Dorsolateral prefrontal cortex (tissue), 120 donors: ENCODE measurements at regions of chr10 and their contacts with region 1.

Region 1: DNA sequence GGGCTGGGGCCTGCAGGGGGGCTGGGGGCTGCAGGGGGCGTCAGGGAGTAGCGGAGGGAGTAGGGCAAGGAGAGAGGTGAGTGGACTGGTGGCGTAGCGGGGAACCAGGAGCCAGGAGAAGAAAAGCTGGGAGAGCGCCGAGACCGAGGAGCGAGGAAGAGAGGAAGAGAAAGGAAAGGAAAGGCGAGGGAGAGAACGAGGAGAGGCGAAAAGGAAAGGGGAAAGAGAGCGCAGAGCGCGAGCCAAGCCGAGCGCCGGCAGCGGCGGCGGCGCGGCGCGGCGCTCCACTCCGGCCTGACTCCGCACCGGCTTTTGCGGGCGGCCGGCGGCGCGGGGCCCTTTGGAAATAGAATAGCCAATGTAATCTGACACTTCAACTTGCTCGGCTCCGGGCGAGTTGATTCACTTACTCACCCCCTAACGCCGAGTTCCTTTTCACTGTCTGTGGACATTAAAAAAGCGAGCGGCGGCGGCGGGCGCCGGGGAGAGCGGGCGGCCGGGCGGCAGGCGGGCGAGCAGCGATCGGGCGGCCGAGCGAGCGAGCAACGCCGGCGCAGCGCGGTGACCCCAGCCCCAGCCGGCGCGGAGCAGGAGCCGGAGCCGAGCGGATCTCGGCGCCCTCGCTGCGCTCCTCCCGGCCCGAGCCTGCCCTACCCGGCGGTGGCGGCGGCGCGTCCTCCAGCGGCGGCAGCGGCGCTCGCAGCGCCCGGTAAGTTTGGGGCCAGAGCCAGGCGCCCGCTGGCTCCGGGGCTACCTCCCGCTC is at the start of gene ZMIZ1:
- DNase-seq: peak; percentile 73 to 92 (median 86)
- H3K4me3 ChIP-seq: peak within 1 kb of the TSS; percentile 60 to 94 (median 81)
- H3K27ac ChIP-seq: peak within 1 kb of the TSS; percentile 53 to 99 (median 93)
- H3K27me3 ChIP-seq: no peaks in the 10 kb centered on the region
- CTCF ChIP-seq: peak in 29 of 56 donors; percentile 2 to 52 (median 17)
- total RNA-seq, gene ZMIZ1: 67.5 to 153 (median 96.5) TPM

Region 2: DNA sequence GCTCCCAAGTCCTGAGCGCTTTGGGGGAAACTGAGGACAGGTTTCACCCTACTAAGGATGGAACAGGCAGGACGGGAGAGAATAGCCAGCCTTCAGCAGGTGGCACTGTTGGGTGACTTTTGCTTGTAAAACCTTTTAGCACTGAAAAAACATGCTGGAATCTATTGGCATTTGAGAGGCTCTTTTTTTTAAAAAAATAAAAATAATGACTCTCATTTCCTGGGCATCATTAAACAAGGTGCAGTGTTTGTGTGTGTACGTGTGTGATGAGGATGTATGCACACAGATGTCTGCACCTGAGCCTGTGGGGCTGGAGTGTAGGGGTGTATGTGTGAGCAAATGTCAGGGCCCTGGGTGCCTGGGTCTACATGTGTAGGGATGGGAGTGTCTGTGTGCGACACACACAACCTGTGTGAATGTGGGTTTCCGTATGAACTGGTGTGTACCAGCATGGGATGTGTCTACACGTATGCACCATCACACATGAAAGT is 857.1 kb before region 1 on chr10:
- intact Hi-C with region 1: loop called in 1 of 2 experiments (anchors 10 kb)
- DNase-seq: peak in 9 of 10 donors; percentile 25 to 84 (median 67)
- H3K4me3 ChIP-seq: no peak overlapping the region
- H3K27ac ChIP-seq: peak overlapping the region in 10 of 59 donors; percentile 6 to 51 (median 28)
- H3K27me3 ChIP-seq: no peaks in the 10 kb centered on the region
- CTCF ChIP-seq: peak in 55 of 56 donors; percentile 38 to 85 (median 70)

Region 3: DNA sequence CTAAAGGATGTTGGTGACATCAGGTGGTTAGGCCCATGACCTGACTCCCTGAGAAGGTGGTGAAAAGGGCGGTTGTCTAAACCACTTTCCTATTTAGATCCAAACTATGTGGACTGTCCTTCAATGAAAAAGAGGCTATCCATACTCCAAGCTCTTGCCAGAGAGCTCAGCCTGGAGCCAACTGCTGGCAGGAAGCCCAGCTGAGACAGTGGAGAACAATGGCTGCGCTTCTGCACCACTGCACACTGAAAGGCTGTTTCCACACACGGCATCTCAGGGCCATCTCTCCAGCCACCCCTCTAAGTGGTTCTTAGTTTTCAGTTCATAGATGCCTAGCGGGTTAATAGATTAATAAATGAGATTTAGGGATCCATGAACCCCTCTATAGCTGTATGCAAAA is 488.7 kb before region 1 on chr10:
- intact Hi-C with region 1: loop called in 1 of 2 experiments (anchors 5 kb)
- DNase-seq: peak; percentile 82 to 94 (median 87)
- H3K4me3 ChIP-seq: no peak overlapping the region
- H3K27ac ChIP-seq: peak overlapping the region in 53 of 59 donors; percentile 13 to 88 (median 67)
- H3K27me3 ChIP-seq: no peaks in the 10 kb centered on the region
- CTCF ChIP-seq: peak in 13 of 56 donors; percentile 8 to 50 (median 14)

Region 4: GRCh38 chr10:78763651-78764311 is 305.0 kb before region 1 on chr10:
- intact Hi-C with region 1: loop called in 1 of 2 experiments (anchors 10 kb)
- DNase-seq: peak in 3 of 10 donors; percentile 31 to 58 (median 46)
- H3K4me3 ChIP-seq: peak overlapping the region in 1 of 59 donors; percentile 1
- H3K27ac ChIP-seq: peak overlapping the region in 54 of 59 donors; percentile 1 to 90 (median 70)
- H3K27me3 ChIP-seq: no peaks in the 10 kb centered on the region
- CTCF ChIP-seq: no peak

Region 5: DNA sequence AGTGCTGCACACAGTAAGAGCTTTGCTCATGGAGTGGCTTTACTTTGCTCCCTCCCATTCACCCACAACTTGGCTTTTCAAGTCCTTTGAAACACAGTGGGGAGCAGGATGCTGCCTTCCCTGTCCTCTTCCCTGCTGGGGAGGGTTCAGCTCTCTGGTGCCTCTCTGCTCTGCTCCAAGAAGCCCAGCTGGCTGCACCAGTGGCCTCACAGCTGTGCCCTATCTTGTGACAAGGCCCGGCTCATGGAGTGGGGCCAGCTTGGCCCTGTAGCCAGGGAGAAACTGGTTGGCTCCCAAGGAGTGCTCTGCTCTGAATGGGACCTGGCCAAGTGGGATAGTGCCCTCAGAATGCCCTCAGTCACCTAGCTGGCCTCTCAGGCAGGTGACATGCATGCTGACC is 212.3 kb before region 1 on chr10:
- intact Hi-C with region 1: loop called in 1 of 2 experiments (anchors 2 kb)
- DNase-seq: peak; percentile 19 to 93 (median 88)
- H3K4me3 ChIP-seq: no peak overlapping the region
- H3K27ac ChIP-seq: peak overlapping the region in 1 of 59 donors; percentile 29
- H3K27me3 ChIP-seq: no peaks in the 10 kb centered on the region
- CTCF ChIP-seq: peak in 12 of 56 donors; percentile 10 to 45 (median 24)

Region 6: DNA sequence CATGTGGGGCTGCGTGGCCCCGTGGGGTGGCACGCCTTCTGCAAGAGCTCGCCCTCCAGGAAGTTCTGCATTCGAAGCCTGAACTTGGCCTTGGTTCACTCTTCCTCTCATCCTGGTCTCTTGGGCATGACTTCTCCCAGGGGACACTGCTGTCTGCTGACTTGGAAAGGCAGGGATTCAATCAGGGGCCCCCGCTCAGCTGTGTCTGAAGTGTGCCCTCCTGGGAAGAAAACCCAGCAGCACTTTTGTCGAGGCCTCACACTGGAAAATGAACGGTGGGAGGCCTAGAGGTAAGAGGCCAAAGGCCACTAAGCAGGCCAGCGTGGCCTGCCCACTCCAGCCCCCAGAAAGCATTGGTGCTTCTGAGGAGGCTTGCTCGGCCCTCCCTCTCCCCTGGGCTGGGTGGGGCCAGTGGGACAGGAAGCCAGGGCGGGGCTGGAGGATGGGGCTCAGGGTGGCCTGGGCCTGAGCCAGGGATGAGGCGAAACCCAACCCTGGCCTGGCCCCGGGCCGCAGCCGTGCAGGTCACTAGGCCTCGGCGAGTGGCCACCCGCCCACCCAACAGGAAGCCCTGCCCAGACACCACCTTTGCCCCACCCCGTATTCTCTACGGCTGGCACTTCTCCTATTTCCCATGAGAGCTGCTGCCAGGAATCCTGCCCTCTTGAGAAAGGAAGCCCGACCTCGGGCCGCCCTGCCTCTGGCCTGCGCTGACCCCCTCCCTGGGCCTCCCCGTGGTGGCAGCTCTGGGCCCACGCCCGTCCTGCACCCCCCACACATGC is 81.1 kb after region 1 on chr10:
- intact Hi-C with region 1: loop called (anchors 2 to 5 kb)
- DNase-seq: no peak
- H3K4me3 ChIP-seq: no peak overlapping the region
- H3K27ac ChIP-seq: peak overlapping the region in 55 of 59 donors; percentile 56 to 91 (median 83)
- H3K27me3 ChIP-seq: no peaks in the 10 kb centered on the region
- CTCF ChIP-seq: no peak